ENCODE measurements at regions of chr2 and their contacts with region 1.

Region 1: DNA sequence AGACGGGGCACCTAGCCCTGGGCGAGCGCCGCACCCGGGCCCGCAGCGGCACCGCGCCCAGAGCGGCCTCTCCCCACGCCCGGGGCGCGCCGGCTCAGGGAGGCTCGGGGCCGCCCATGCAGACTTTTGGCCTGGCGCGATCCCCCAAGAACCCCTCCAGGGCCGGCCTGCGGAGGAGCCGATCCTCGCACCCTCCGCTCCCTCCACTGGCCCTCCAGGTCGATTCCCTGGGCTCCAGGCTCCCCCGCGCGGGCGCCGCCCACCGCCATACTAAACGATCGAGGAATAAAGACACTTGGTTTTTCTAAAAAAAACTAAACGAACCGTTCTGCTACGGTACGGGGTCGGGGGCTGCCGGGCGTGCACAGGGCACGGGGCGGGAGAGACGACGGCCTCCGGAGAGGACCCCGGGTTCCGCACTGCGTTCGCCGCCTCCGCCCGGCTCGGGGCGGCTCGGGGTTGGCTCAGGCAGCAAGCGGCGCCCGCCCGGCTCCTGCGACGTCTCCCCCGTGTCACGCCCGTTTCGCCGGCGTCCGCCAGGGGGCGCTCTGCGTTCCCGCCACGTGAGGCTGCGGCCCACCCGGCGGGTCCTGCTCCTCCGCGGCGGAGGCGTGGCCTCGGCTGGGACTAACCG is 365 bp upstream of the KHK start:
- DNase-seq: peak; percentile 86 to 98 (median 93)
- H3K4me3 ChIP-seq: peak overlapping the region; percentile 57 to 98 (median 79)
- H3K27ac ChIP-seq: peak overlapping the region; percentile 16 to 98 (median 93)
- H3K27me3 ChIP-seq: no peaks in the 10 kb centered on the region
- CTCF ChIP-seq: peak; percentile 69 to 98 (median 86)

Region 2: DNA sequence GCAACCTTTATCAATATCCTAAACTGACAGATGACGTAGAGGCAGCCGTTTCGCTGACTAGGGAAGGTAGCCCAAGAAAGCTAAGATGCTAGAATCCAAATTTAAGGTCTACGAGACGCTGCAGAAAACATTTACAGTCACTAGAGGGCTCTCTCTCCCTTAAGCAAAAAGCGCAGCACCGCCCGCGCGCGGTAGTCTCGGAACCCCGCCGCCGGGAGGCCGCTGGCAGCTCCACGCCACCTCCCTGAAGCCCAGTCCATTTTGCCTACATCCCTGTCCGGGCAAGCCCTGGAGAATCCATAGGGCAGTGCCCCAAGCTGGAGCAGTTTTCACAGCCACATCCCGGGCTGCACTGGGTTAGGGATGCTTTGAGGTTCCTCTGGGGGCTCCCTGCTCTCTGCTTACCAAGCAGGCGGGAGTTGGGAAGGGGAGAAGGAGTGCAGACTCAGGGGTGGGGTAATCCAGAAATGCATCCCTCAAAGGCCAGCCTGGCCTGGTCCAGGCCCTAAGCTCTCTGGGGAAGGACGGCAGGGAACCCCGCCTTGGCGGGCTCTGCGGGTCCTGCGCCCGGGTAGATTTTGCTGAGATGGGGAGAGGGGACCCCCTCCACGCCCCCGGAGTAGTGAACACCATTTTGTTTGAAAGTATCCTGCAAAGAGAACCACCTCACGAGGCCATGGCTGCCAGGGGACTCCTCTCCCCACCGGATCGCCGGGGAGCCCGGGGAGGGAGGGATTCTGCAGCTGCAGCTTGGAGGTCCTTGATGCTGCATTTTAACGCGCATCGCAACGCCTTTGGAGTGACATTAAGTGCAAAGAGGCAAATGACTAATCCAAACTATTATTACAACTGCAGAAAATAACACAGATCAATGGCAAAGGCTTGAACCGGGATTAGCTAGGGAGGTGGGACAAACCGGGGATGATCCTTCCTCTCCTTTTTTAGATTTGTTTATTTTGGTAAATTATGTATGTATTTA is 239.6 kb before region 1 on chr2:
- intact Hi-C with region 1: loop called in 1 of 2 experiments (anchors 5 kb)
- DNase-seq: peak; percentile 72 to 89 (median 82)
- H3K4me3 ChIP-seq: peak overlapping the region in 57 of 59 donors; percentile 0 to 85 (median 73)
- H3K27ac ChIP-seq: peak overlapping the region in 57 of 59 donors; percentile 19 to 93 (median 85)
- H3K27me3 ChIP-seq: peaks cover 0 to 33% (median 4%) of the 10 kb centered on the region in 45 donors
- CTCF ChIP-seq: peak; percentile 72 to 98 (median 90)

Region 3: DNA sequence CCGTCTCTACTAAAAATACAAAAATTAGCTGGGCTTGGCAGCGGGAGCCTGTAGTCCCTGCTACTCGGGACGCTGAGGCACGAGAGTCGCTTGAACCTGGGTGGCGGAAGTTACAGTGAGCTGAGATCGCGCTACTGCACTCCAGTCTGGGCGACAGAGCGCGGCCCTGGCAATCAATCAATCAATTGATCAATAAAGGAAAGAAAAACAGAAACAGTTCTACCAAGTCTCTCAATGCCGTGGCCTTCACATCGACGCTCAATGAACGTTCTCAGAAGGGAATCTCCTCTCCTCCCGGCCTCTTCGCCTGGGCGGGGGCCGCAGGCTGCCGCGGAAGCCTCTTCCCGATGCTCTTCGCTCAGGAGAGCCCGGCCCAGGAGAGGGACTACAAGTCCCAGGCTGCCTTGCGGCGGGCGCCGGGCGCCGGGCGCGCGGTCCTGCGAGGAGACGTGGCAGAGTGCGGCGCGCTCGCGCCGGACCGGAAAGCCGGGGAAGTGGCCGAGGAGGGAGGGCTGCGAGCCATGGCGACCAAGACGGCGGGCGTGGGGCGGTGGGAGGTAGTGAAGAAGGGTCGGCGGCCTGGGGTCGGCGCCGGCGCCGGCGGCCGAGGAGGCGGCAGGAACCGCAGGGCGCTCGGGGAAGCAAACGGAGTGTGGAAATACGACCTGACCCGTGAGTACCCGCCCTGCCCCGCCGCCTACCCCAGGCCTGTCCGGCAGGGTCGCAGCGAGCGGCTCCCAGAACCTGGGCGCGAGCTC is 53.5 kb before region 1 on chr2 and contains the start of gene TMEM214:
- intact Hi-C with region 1: loop called in 1 of 2 experiments (anchors 5 kb)
- DNase-seq: peak; percentile 79 to 94 (median 88)
- H3K4me3 ChIP-seq: peak within 1 kb of the TSS; percentile 64 to 99 (median 92)
- H3K27ac ChIP-seq: peak within 1 kb of the TSS in 54 of 59 donors; percentile 25 to 92 (median 71)
- H3K27me3 ChIP-seq: no peaks in the 10 kb centered on the region
- CTCF ChIP-seq: peak in 24 of 56 donors; percentile 5 to 47 (median 28)
- total RNA-seq, gene TMEM214: 30.6 to 65.3 (median 43.5) TPM

Region 4: DNA sequence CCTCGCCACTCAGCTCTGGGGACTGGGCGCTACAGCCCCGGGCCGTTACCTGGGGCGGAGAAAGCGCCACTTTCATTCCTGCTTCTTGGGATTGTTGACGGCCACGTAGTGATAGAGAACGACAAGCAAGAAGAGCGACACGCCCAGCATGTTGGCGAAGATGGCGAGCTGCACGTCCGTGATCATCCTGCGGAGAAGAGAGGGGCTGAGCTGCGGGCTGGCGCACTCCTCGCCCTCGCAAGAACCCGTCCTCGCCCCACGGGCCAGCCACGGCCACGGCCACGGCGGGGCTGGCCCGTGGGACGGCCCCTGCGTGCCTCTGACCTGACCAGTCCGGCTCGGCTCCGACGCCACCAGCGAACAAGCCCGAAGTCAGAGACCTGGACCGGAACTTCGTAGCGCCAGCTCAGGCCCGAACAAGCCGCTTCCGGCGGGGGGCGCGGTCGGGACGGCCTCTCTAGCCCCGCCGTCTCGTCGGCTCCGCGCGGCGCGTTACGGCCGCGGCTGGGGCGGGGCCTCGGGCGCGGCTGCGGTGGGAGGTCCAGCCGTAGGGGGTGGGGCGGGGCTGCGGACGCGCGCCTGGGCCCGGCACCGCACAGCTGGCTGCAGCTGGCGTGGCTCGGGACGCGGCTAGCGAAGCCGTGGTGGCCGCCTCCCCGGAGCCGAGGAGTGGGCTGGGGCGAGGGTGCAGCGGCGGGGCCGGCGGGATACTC is 14.8 kb before region 1 on chr2 and contains the start of gene OST4:
- intact Hi-C with region 1: loop called in 1 of 2 experiments (anchors 2 kb)
- DNase-seq: peak; percentile 91 to 98 (median 95)
- H3K4me3 ChIP-seq: peak within 1 kb of the TSS; percentile 64 to 99 (median 91)
- H3K27ac ChIP-seq: peak within 1 kb of the TSS; percentile 66 to 96 (median 89)
- H3K27me3 ChIP-seq: no peaks in the 10 kb centered on the region
- CTCF ChIP-seq: peak in 42 of 56 donors; percentile 15 to 74 (median 43)
- total RNA-seq, gene OST4: 62.3 to 158 (median 110) TPM

Region 5: DNA sequence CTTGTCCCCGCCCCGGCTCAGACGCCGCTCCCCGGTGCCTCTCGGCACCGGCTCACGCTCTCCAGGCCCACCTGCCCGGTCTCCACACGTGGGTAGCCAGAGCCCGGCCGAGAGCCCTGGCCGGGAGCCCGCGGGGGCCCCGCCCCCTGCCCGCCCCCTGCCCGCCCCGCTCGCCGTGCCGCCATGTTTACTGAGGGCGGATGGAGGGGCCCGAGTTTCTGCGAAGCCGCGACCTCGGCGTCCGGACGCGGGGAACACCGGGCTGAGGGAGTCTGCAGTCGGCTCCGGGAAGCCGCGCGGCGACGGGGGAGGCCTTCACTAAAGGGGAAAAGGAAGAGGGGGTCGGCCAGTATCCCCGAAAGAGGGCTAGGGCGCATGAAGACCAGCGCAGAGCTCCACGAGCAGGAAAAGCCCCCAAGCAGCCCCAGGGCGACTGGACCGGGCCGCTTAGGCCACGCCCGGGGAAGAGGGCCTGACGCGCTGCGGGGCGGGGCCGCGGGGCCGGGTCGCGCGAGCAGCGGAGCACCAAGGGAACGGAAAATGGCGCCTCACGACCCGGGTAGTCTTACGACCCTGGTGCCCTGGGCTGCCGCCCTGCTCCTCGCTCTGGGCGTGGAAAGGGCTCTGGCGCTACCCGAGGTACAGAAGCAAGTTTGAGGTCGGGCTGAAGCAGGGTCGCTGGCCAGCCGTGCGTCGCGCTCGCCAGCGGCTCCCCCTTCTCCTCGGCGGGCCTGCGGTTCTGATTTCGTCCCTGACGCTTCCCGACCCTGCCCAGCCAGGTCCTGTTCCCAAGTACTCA is 125.8 kb after region 1 on chr2 and contains the starts of genes ATRAID and SLC5A6:
- intact Hi-C with region 1: loop called in 1 of 2 experiments (anchors 5 kb)
- DNase-seq: peak; percentile 71 to 92 (median 86)
- H3K4me3 ChIP-seq: peak within 1 kb of the TSS; percentile 64 to 100 (median 88)
- H3K27ac ChIP-seq: peak within 1 kb of the TSS; percentile 76 to 99 (median 96)
- H3K27me3 ChIP-seq: no peaks in the 10 kb centered on the region
- CTCF ChIP-seq: peak in 12 of 56 donors; percentile 1 to 51 (median 16)
- total RNA-seq, gene ATRAID: 28.0 to 68.1 (median 45.4) TPM
- total RNA-seq, gene SLC5A6: 21.6 to 107 (median 39.0) TPM